CD4-positive, alpha-beta memory T cell (primary cell): ENCODE measurements at regions of chr6 and their contacts with region 1.

Region 1: DNA sequence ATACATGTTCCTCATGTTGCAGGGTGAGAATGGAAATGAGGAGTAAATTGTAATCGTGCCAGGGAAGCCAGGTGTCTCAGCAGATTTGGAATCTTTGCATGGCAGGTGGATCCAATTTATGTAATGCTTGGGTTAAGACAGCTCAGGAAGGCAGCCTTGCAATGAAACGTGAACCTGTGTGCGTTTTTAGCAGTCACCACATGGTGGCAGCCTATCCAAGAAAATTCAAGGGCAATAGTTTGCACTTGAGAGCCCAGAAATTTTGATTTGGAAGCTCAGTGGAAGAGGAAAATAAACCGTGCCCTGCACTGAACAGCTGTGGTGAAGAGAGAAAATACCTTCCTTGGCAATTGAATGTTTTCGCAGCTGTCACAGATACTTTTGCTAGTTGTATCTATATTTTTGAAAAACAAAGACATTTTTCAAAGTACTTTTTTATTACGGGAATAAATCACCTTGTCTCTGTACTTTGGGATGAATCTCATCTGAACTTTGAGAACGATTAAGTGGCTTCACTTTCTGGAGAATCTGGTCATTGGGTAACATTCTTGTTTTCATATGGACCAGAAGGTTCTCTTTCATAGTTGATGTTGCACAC is 26.5 kb downstream of the MTHFD1L start:
- DNase-seq: peak; percentile 50 to 59 (median 50)
- H3K4me3 ChIP-seq: no peak overlapping the region
- H3K4me3 Mint-ChIP-seq: no peak overlapping the region
- H3K27ac ChIP-seq: no peak overlapping the region
- H3K27ac Mint-ChIP-seq: peak overlapping the region in 1 of 7 donors; percentile 1
- H3K4me1 ChIP-seq: peaks cover 17% of the 10 kb centered on the region
- H3K4me1 Mint-ChIP-seq: peaks cover 8 to 21% (median 19%) of the 10 kb centered on the region in 4 donors
- H3K27me3 ChIP-seq: no peaks in the 10 kb centered on the region
- H3K27me3 Mint-ChIP-seq: no peaks in the 10 kb centered on the region

Region 2: GRCh38 chr6:150775415-150776203 is 116.4 kb before region 1 on chr6:
- CTCF ChIA-PET with region 1: no interaction called
- POLR2A ChIA-PET with region 1: no interaction called
- intact Hi-C with region 1: no loop called
- DNase-seq: no peak
- H3K4me3 ChIP-seq: no peak overlapping the region
- H3K4me3 Mint-ChIP-seq: no peak overlapping the region
- H3K27ac ChIP-seq: no peak overlapping the region
- H3K27ac Mint-ChIP-seq: no peak overlapping the region
- H3K4me1 ChIP-seq: no peaks in the 10 kb centered on the region
- H3K4me1 Mint-ChIP-seq: no peaks in the 10 kb centered on the region
- H3K27me3 ChIP-seq: no peaks in the 10 kb centered on the region
- H3K27me3 Mint-ChIP-seq: no peaks in the 10 kb centered on the region

Region 3: DNA sequence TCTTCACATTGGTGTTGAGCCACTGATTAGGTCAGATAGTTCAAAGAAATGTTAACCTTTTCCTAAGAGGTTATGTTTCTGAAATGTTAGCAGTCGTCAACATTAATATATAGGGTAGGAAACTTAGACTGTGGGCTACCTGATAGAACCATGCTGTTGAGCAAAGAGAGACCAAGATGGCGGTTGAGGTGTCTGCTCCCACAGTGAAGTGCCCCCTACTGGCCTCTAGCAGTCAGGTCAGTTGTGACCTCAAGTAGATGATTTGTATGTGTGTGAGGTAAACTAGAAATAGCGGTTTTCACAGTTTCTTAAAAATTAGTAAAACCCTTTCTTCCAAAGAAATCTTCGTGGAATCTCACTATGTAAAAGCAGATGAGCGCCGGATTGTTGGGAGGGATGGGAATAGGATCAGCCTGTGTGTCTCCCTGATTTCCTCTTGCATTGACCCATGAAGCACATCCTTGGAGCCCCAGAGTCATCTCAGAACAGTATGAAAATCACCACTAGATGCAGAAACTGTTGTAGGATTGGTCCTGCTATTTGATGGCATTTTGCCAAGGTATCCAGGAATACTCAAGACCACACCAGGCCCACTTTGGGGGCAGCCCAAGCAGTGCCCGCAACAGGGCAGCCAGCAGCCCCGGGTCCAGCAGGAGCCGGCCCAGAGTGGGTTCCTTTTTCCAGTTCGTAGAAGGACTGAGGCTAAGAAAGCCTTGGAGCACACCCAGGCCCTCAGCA is 14.0 kb after region 1 on chr6:
- CTCF ChIA-PET with region 1: interaction called, 48 read pairs
- POLR2A ChIA-PET with region 1: no interaction called
- intact Hi-C with region 1: no loop called
- DNase-seq: no peak
- H3K4me3 ChIP-seq: no peak overlapping the region
- H3K4me3 Mint-ChIP-seq: no peak overlapping the region
- H3K27ac ChIP-seq: no peak overlapping the region
- H3K27ac Mint-ChIP-seq: no peak overlapping the region
- H3K4me1 ChIP-seq: no peaks in the 10 kb centered on the region
- H3K4me1 Mint-ChIP-seq: no peaks in the 10 kb centered on the region
- H3K27me3 ChIP-seq: no peaks in the 10 kb centered on the region
- H3K27me3 Mint-ChIP-seq: no peaks in the 10 kb centered on the region

Region 4: DNA sequence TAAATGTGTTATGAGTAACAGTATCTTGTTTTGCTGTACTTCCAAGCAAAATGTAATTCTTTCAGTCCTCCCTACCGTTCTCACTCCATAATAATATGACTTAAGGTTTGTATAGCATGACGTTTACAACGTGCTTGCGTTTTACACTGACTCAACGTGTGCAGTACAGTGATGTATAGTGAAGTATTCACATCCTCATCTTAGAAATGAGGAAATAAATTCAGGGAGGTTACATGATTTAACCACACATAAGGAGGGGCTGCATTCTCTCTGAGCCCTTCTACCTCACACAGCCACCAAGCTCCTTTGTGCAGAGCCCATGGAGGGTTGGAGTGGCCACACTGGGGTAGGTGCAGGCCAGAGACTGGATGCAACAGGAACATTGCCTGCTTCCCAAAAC is 138.0 kb after region 1 on chr6:
- CTCF ChIA-PET with region 1: no interaction called
- POLR2A ChIA-PET with region 1: no interaction called
- intact Hi-C with region 1: no loop called
- DNase-seq: no peak
- H3K4me3 ChIP-seq: no peak overlapping the region
- H3K4me3 Mint-ChIP-seq: no peak overlapping the region
- H3K27ac ChIP-seq: no peak overlapping the region
- H3K27ac Mint-ChIP-seq: no peak overlapping the region
- H3K4me1 ChIP-seq: no peaks in the 10 kb centered on the region
- H3K4me1 Mint-ChIP-seq: no peaks in the 10 kb centered on the region
- H3K27me3 ChIP-seq: no peaks in the 10 kb centered on the region
- H3K27me3 Mint-ChIP-seq: no peaks in the 10 kb centered on the region

Region 5: GRCh38 chr6:151317103-151317994 is 425.4 kb after region 1 on chr6:
- CTCF ChIA-PET with region 1: interaction called, 860 read pairs
- POLR2A ChIA-PET with region 1: no interaction called
- intact Hi-C with region 1: no loop called
- DNase-seq: no peak
- H3K4me3 ChIP-seq: no peak overlapping the region
- H3K4me3 Mint-ChIP-seq: no peak overlapping the region
- H3K27ac ChIP-seq: no peak overlapping the region
- H3K27ac Mint-ChIP-seq: no peak overlapping the region
- H3K4me1 ChIP-seq: no peaks in the 10 kb centered on the region
- H3K4me1 Mint-ChIP-seq: no peaks in the 10 kb centered on the region
- H3K27me3 ChIP-seq: no peaks in the 10 kb centered on the region
- H3K27me3 Mint-ChIP-seq: peaks cover 3 to 10% of the 10 kb centered on the region in 2 donors

Region 6: DNA sequence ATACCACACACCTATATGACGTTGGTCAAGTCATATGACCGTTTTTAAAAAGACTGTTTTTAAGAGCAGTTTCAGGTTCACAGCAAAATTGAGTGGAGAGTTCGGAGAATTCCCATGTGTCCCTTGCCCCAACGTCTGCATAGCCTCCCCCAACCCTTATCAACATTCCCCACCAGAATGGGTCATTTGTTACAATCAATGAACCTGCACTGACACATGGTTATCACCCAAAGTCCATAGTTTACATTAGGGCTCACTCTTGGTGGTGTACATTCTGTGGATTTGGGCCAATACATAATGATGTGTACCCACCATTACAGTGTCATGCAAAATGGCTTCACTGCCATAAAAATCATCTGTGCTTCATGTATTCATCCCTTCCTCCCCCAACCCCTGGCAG is 447.4 kb after region 1 on chr6:
- CTCF ChIA-PET with region 1: interaction called, 860 read pairs
- POLR2A ChIA-PET with region 1: interaction called, 4 read pairs
- intact Hi-C with region 1: loop called (anchors 1 kb)
- DNase-seq: no peak
- H3K4me3 ChIP-seq: no peak overlapping the region
- H3K4me3 Mint-ChIP-seq: no peak overlapping the region
- H3K27ac ChIP-seq: no peak overlapping the region
- H3K27ac Mint-ChIP-seq: no peak overlapping the region
- H3K4me1 ChIP-seq: no peaks in the 10 kb centered on the region
- H3K4me1 Mint-ChIP-seq: peaks cover 0 to 4% (median 3%) of the 10 kb centered on the region in 4 donors
- H3K27me3 ChIP-seq: no peaks in the 10 kb centered on the region
- H3K27me3 Mint-ChIP-seq: peaks cover 3 to 4% of the 10 kb centered on the region in 2 donors